ENCODE measurements at regions of chr4 and their contacts with region 1.

Region 1: DNA sequence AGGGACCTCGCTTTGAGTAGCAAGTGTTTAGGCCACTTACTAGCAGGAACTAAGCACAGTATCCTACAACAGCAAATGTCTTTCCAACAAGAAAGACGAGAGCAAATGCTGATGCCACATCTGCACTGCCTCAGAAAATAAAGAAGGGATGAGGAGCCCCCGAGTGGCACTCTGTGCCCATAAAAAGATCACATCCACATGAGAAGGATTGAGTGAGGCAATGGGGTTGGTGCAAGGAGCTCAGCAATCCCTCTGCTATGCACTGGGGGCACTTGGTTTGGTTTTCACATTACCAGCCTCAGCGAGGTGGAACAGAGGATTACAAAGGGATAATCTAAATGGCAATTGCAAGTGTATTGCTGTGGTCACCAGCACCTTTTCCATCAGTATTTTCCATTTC is 252.8 kb upstream of the SLC7A11 start:
- DNase-seq: peak; percentile 60
- H3K4me3 Mint-ChIP-seq: no peak overlapping the region
- H3K27ac Mint-ChIP-seq: no peak overlapping the region
- H3K4me1 Mint-ChIP-seq: no peaks in the 10 kb centered on the region
- H3K27me3 Mint-ChIP-seq: no peaks in the 10 kb centered on the region
- CTCF ChIP-seq: peak; percentile 41

Region 2: GRCh38 chr4:138199568-138200235 is 295.2 kb before region 1 on chr4:
- CTCF ChIA-PET with region 1: no interaction called
- POLR2A ChIA-PET with region 1: no interaction called
- intact Hi-C with region 1: loop called (anchors 10 kb)
- DNase-seq: peak; percentile 87
- H3K4me3 Mint-ChIP-seq: peak overlapping the region; percentile 69
- H3K27ac Mint-ChIP-seq: peak overlapping the region; percentile 97
- H3K4me1 Mint-ChIP-seq: peaks cover 26% of the 10 kb centered on the region
- H3K27me3 Mint-ChIP-seq: no peaks in the 10 kb centered on the region
- CTCF ChIP-seq: no peak

Region 3: DNA sequence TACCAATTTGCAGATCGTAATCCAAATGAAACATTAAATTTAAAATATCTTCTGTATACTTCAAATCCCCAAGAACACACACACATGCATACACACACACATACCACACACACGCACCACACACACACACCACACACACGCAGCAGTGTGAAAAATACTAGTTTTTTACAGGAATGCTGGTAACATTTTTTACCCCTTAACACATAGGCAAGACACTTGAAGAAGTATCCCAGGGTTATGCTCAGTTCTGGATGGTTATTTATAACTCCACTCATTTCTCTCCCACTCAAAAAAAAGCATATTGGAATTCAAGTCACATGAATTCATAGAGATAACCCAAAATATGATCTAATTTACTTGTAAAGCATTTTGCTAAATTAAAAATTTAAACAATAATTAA is 72.8 kb after region 1 on chr4:
- CTCF ChIA-PET with region 1: no interaction called
- POLR2A ChIA-PET with region 1: no interaction called
- intact Hi-C with region 1: no loop called
- DNase-seq: no peak
- H3K4me3 Mint-ChIP-seq: no peak overlapping the region
- H3K27ac Mint-ChIP-seq: no peak overlapping the region
- H3K4me1 Mint-ChIP-seq: no peaks in the 10 kb centered on the region
- H3K27me3 Mint-ChIP-seq: no peaks in the 10 kb centered on the region
- CTCF ChIP-seq: no peak